Endothelial cell of umbilical vein (primary cell): ENCODE measurements at regions of chr5 and their contacts with region 1.

Region 1: GRCh38 chr5:133423618-133424282 is 188.6 kb downstream of the FSTL4 start:
- DNase-seq: peak; percentile 54
- H3K4me3 ChIP-seq: no peak overlapping the region
- H3K27ac ChIP-seq: no peak overlapping the region
- H3K4me1 ChIP-seq: no peaks in the 10 kb centered on the region
- H3K27me3 ChIP-seq: peaks cover 0 to 4% of the 10 kb centered on the region in 2 experiments
- CTCF ChIP-seq: peak; percentile 91 to 99
- POLR2A ChIP-seq: no peak

Region 2: GRCh38 chr5:132754947-132755346 is 668.8 kb before region 1 on chr5:
- CTCF ChIA-PET with region 1: no interaction called
- POLR2A ChIA-PET with region 1: no interaction called
- dilution Hi-C with region 1: no loop called
- intact Hi-C with region 1: no loop called
- DNase-seq: peak; percentile 42
- H3K4me3 ChIP-seq: no peak overlapping the region
- H3K27ac ChIP-seq: no peak overlapping the region
- H3K4me1 ChIP-seq: no peaks in the 10 kb centered on the region
- H3K27me3 ChIP-seq: no peaks in the 10 kb centered on the region
- CTCF ChIP-seq: peak in 1 of 2 donors; percentile 39
- POLR2A ChIP-seq: no peak

Region 3: GRCh38 chr5:133409210-133409674 is 14.5 kb before region 1 on chr5:
- CTCF ChIA-PET with region 1: interaction called, 12 read pairs
- POLR2A ChIA-PET with region 1: no interaction called
- dilution Hi-C with region 1: no loop called
- intact Hi-C with region 1: no loop called
- DNase-seq: no peak
- H3K4me3 ChIP-seq: no peak overlapping the region
- H3K27ac ChIP-seq: no peak overlapping the region
- H3K4me1 ChIP-seq: no peaks in the 10 kb centered on the region
- H3K27me3 ChIP-seq: peaks cover 3 to 9% of the 10 kb centered on the region in 2 experiments
- CTCF ChIP-seq: no peak
- POLR2A ChIP-seq: no peak

Region 4: GRCh38 chr5:133531594-133531993 is 107.8 kb after region 1 on chr5:
- CTCF ChIA-PET with region 1: interaction called, 30 read pairs
- POLR2A ChIA-PET with region 1: no interaction called
- dilution Hi-C with region 1: no loop called
- intact Hi-C with region 1: loop called (anchors 5 kb)
- DNase-seq: no peak
- H3K4me3 ChIP-seq: no peak overlapping the region
- H3K27ac ChIP-seq: no peak overlapping the region
- H3K4me1 ChIP-seq: no peaks in the 10 kb centered on the region
- H3K27me3 ChIP-seq: peaks cover 3% of the 10 kb centered on the region in 2 experiments
- CTCF ChIP-seq: no peak
- POLR2A ChIP-seq: no peak

Region 5: GRCh38 chr5:133552931-133553525 is 129.3 kb after region 1 on chr5:
- CTCF ChIA-PET with region 1: interaction called, 10 read pairs
- POLR2A ChIA-PET with region 1: no interaction called
- dilution Hi-C with region 1: no loop called
- intact Hi-C with region 1: no loop called
- DNase-seq: peak; percentile 55
- H3K4me3 ChIP-seq: no peak overlapping the region
- H3K27ac ChIP-seq: no peak overlapping the region
- H3K4me1 ChIP-seq: no peaks in the 10 kb centered on the region
- H3K27me3 ChIP-seq: peaks cover 2 to 10% of the 10 kb centered on the region in 2 experiments
- CTCF ChIP-seq: peak; percentile 75 to 89
- POLR2A ChIP-seq: no peak

Region 6: GRCh38 chr5:133754575-133755169 is 330.9 kb after region 1 on chr5:
- CTCF ChIA-PET with region 1: interaction called, 10 read pairs
- POLR2A ChIA-PET with region 1: no interaction called
- dilution Hi-C with region 1: no loop called
- intact Hi-C with region 1: no loop called
- DNase-seq: peak; percentile 21
- H3K4me3 ChIP-seq: no peak overlapping the region
- H3K27ac ChIP-seq: no peak overlapping the region
- H3K4me1 ChIP-seq: peaks cover 9% of the 10 kb centered on the region
- H3K27me3 ChIP-seq: peaks cover 0 to 5% of the 10 kb centered on the region in 2 experiments
- CTCF ChIP-seq: peak; percentile 40 to 47
- POLR2A ChIP-seq: no peak

Region 7: DNA sequence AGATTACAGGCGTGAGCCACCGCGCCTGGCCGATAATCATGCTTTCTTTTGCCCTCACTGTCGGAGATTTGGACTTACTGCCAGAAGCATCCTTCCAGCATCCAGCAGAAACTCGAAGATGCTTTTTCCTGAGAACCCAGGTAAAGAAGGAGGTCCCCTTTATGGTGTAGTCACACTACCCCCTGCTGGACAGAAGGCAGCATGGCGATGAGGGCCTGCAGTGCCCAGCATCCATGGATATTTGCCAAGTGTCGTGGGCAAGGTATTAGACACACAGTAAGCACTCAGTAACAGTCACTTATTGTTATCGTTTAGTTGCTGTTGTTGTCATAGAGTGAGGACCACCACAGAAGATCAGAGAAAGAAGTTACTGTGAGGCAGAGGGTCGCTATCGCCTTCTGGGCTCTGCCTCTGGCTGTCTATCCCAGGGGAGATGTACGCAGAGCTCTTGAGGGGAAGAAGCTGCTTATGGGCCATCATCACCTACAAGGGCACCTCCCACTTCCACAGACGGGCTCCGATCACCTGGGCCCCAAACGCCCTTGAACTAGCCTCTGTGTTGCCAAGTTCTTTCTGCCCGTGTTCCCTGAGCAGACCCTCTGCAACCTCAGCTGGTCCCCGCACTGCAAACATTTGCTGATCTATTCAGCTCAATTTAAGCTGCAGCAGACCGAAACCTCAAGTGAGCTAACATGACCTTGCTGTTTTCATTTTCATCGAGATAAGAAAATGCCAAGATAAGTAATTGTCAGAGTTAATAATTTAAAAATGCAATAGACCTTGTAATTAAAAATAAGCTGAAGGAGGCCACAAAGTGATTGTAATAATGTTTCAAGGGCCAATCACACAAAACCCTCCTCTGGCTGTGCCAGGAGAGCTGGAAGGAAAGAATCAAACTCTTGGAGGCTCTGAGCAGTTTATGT is 520.8 kb after region 1 on chr5:
- CTCF ChIA-PET with region 1: interaction called, 31 read pairs
- POLR2A ChIA-PET with region 1: no interaction called
- dilution Hi-C with region 1: no loop called
- intact Hi-C with region 1: loop called (anchors 1 kb)
- DNase-seq: peak; percentile 53
- H3K4me3 ChIP-seq: no peak overlapping the region
- H3K27ac ChIP-seq: no peak overlapping the region
- H3K4me1 ChIP-seq: no peaks in the 10 kb centered on the region
- H3K27me3 ChIP-seq: no peaks in the 10 kb centered on the region
- CTCF ChIP-seq: peak; percentile 79
- POLR2A ChIP-seq: no peak